HEK293 (cell line): ENCODE measurements at regions of chr12 and their contacts with region 1.

Region 1: DNA sequence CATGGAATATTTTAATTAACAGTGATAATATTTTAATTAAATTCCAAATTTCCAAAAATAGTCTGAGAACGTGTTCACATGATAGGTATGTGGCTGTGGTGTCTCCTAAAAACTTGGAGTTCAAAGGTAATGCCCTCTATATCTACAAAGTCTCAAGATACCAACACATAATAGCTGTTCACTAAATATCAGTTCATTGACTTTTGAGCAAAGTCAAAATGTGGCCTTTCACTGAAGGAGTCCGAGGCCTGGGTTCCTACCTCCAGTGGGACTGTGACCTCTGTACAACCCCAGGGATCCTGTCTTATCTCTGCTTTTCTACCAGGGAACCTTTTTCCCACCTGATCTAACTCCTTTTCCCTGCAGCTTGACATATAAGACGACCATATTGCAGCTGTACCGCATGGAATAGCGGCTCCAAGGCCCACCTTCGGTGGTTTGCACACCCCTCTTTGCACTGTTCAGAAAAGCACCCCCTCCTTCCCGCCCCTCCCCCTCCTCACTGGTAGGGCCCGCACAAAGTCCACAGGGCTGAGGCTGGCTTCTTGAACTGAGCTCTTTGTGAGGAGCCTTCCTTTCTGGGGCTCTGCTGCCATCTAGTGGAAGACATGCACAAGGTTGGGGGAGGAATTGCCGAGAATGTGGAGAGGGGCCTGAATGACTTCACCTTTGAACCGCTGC is 3.1 kb downstream of the CCND2 start:
- H3K4me3 ChIP-seq: no peak overlapping the region
- H3K27ac ChIP-seq: no peak overlapping the region
- H3K4me1 ChIP-seq: peaks cover 18% of the 10 kb centered on the region
- CTCF ChIP-seq: peak; percentile 87

Region 2: GRCh38 chr12:3885277-3886094 is 391.2 kb before region 1 on chr12:
- CTCF ChIA-PET with region 1: interaction called, 86 read pairs
- POLR2A ChIA-PET with region 1: no interaction called
- H3K4me3 ChIP-seq: no peak overlapping the region
- H3K27ac ChIP-seq: no peak overlapping the region
- H3K4me1 ChIP-seq: no peaks in the 10 kb centered on the region
- CTCF ChIP-seq: peak; percentile 61

Region 3: DNA sequence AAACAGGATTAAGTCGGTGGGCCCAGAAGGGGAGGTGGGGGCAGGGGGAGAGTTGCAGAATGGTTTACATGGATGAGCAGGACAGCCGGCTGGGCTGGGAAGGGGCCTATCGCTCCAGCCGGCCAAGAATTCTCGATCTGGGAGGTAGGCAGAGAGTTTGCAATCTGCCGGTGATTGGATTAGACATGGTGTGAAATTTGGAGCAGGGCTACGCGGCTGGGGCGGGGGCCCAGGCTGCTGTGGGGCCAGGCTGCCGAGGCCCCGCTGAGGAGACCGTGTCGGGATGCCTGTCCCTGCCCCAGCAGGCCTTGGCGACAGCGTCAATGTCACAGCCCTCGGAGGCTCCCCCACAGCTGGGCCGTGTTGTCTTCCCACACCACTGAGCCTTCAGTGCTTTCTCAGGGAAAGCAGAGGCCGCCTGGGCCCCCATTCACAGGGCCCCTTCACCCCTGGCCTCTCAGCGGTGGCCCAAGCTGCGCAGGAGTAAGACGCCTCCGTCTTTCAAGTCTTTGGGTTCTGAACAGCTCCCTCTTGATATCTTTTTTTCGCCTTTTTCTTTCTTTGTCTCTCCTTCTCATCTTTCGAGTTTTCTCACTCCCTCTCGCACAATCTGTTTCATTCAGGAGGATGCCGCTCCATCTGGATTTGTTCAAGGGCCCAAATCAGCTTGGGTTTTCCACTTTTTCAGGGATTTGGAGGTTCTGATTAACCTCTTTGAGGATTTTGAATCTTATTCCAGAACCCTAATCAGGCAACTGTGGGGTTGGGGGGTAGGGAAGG is 286.0 kb before region 1 on chr12:
- CTCF ChIA-PET with region 1: interaction called, 61 read pairs
- POLR2A ChIA-PET with region 1: interaction called, 5 read pairs
- H3K4me3 ChIP-seq: no peak overlapping the region
- H3K27ac ChIP-seq: no peak overlapping the region
- H3K4me1 ChIP-seq: no peaks in the 10 kb centered on the region
- CTCF ChIP-seq: no peak

Region 4: GRCh38 chr12:4011597-4011996 is 265.1 kb before region 1 on chr12:
- CTCF ChIA-PET with region 1: interaction called, 25 read pairs
- POLR2A ChIA-PET with region 1: interaction called, 3 read pairs
- H3K4me3 ChIP-seq: no peak overlapping the region
- H3K27ac ChIP-seq: no peak overlapping the region
- H3K4me1 ChIP-seq: peaks cover 3% of the 10 kb centered on the region
- CTCF ChIP-seq: no peak

Region 5: GRCh38 chr12:4037747-4038312 is 238.8 kb before region 1 on chr12:
- CTCF ChIA-PET with region 1: interaction called, 39 read pairs
- POLR2A ChIA-PET with region 1: interaction called, 3 read pairs
- H3K4me3 ChIP-seq: no peak overlapping the region
- H3K27ac ChIP-seq: no peak overlapping the region
- H3K4me1 ChIP-seq: no peaks in the 10 kb centered on the region; the same call in 1 of the 2 replicates
- CTCF ChIP-seq: peak; percentile 56

Region 6: DNA sequence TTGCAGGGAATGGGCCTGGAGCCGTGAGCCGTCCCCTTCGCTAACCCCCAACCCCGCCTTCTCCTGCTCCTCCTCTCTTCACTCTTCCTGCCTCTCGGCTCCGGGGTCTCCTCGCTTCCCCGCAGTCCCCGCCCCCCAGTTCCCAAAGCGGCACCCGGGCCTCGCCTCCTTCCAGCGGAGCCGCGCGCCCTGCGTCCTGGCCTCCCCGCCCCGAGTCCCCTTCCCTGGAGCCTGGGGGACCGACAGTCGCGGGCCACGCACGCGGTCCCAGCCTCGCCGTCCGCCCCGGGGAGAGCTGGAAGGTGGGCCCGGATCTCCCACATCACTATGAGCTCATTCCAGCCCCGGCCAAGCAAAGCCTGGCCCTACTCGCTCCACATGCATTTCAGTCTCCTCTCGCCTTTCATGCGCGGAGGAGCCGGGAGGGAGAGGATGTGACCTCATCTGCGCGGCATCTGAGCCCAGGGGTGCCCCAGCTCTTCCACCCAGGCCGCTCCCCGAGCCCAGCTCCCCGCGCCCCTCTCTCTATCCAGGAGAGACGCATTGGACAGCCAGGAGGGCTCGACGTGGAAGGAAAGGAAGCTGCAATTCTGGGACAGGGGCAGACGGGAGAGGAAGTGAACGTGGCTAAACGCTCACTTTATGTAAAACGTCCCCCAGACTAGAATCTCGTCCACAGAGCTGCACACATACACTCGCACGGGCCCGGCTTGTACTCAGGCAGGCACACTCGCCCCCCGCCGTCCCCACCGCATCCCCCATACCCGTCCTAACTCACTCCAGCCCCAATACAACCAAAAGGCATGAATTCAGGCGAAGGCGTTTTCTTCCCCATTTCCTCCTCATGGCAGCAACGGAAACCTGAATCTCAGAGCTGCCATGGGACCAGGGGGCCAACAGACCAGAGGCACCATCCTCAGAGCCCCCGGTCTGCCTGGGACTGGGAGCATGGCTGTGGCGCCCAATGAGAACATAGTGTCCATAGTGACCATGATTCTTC is 111.8 kb before region 1 on chr12:
- CTCF ChIA-PET with region 1: interaction called, 12 read pairs
- POLR2A ChIA-PET with region 1: interaction called, 10 read pairs
- H3K4me3 ChIP-seq: peak overlapping the region; percentile 32
- H3K27ac ChIP-seq: no peak overlapping the region
- H3K4me1 ChIP-seq: no peaks in the 10 kb centered on the region
- CTCF ChIP-seq: no peak

Region 7: GRCh38 chr12:4402996-4403395 is 126.3 kb after region 1 on chr12:
- CTCF ChIA-PET with region 1: no interaction called
- POLR2A ChIA-PET with region 1: no interaction called
- H3K4me3 ChIP-seq: no peak overlapping the region
- H3K27ac ChIP-seq: no peak overlapping the region
- H3K4me1 ChIP-seq: no peaks in the 10 kb centered on the region
- CTCF ChIP-seq: no peak